ENCODE measurements at regions of chr11 and their contacts with region 1.

Region 1: DNA sequence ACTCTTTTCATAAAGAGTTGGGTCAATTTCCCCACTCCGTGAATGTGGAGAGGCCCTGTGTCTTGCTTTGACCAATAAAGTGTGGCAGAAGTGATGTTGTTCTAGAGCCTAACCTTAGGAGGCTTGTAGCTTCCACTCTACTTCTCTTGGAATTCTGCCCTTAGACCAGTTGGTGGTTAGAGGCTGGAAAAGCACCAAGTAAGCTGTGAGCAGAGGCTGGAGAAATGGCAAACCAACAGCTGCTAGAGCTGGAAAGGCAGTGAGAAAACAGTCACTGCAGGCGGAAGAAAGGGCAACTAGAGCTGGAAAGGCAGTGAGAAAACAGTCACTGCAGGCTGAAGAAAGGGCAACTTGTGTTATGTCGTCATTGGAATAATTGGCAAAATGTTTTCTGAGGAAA is 29.8 kb upstream of the MSANTD2 start:
- DNase-seq: no peak
- ATAC-seq: no peak
- H3K4me3 ChIP-seq: no peak overlapping the region
- H3K27ac ChIP-seq: no peak overlapping the region
- H3K4me1 ChIP-seq: no peaks in the 10 kb centered on the region
- H3K27me3 ChIP-seq: peaks cover 0 to 33% (median 9%) of the 10 kb centered on the region in 7 donors
- CTCF ChIP-seq: no peak

Region 2: DNA sequence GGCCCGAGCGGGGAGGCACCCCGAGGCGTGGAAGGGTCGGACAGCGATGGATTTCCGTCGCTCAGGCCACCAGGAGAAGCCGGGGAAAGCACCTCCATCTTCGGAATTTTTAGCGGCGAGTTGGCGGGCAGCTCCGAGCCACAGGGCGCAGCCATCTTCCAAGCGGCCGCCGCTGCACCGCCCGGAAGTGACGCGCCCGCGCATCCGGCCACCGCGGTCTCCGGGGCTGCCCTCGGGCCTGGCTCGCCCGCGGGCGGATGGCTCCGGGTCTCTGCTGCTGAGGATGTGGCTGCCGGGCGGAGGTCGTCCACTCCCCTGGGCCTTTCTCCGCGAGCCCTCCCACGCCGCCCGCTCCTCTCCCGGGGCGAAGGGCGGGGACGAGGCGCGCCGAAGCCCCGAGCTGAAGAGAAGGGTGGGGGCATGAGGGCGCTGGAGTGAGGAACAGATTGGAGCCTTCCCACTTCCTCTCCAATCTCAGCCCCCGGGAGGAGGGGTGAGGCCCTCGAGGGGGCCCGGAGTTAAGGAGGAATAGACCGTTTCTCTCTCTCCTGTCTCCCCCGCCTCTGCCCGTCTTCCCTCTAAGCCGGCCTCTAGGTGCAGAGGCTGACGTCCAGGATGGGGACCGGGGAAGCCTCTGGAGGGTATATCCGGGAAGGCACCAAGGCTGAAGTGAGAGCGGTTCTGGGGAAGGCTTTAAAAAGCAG is 29.6 kb before region 1 on chr11 and contains the start of gene MSANTD2:
- intact Hi-C with region 1: loop called in 2 of 10 experiments (anchors 5 kb)
- DNase-seq: peak; percentile 83 to 86
- ATAC-seq: peak; percentile 96 to 99 (median 98)
- H3K4me3 ChIP-seq: peak within 1 kb of the TSS; percentile 65 to 93 (median 84)
- H3K27ac ChIP-seq: peak within 1 kb of the TSS; percentile 94 to 100 (median 98)
- H3K4me1 ChIP-seq: peaks cover 5 to 37% (median 33%) of the 10 kb centered on the region in 9 donors
- H3K27me3 ChIP-seq: peaks cover 0 to 4% (median 0%) of the 10 kb centered on the region in 7 donors
- CTCF ChIP-seq: no peak
- total RNA-seq, gene MSANTD2: 2.4 to 4.6 (median 3.1) TPM